Esophagus muscularis mucosa (tissue), 4 donors: ENCODE measurements at regions of chr1 and their contacts with region 1.

Region 1: DNA sequence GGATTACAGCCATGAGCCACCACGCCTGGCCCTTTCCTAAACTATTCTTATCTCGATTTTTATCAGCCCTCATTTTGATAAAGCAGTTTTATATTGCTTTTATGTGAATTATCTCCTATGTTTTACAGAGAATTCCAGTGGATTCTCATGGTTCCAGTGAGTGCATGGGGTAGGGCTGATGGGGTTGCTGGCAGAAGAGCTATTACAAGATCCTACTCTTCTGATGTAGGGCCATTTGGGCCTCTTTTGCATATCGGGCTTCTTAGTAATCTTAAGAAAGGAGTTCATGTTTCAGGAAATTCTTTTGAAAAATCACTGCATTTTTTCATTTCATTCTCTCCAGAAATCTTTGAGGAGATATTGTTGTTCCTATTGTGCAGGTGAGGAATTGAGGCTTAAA is 187.7 kb downstream of the PBX1 start:
- DNase-seq: no peak
- H3K4me3 ChIP-seq: no peak overlapping the region
- H3K27ac ChIP-seq: peak overlapping the region; percentile 75 to 89 (median 84)
- H3K4me1 ChIP-seq: peaks cover 39 to 78% (median 70%) of the 10 kb centered on the region in 4 donors
- H3K27me3 ChIP-seq: no peaks in the 10 kb centered on the region
- CTCF ChIP-seq: no peak
- EP300 ChIP-seq: no peak
- POLR2A ChIP-seq: no peak

Region 2: GRCh38 chr1:164726235-164726634 is 20.4 kb before region 1 on chr1:
- intact Hi-C with region 1: loop called (anchors 2 kb)
- DNase-seq: no peak
- H3K4me3 ChIP-seq: no peak overlapping the region
- H3K27ac ChIP-seq: no peak overlapping the region
- H3K4me1 ChIP-seq: peaks cover 38 to 68% (median 67%) of the 10 kb centered on the region in 4 donors
- H3K27me3 ChIP-seq: no peaks in the 10 kb centered on the region
- CTCF ChIP-seq: no peak
- EP300 ChIP-seq: no peak
- POLR2A ChIP-seq: no peak